Posterior cingulate gyrus (tissue), 11 donors: ENCODE measurements at regions of chr17 and their contacts with region 1.

Region 1: DNA sequence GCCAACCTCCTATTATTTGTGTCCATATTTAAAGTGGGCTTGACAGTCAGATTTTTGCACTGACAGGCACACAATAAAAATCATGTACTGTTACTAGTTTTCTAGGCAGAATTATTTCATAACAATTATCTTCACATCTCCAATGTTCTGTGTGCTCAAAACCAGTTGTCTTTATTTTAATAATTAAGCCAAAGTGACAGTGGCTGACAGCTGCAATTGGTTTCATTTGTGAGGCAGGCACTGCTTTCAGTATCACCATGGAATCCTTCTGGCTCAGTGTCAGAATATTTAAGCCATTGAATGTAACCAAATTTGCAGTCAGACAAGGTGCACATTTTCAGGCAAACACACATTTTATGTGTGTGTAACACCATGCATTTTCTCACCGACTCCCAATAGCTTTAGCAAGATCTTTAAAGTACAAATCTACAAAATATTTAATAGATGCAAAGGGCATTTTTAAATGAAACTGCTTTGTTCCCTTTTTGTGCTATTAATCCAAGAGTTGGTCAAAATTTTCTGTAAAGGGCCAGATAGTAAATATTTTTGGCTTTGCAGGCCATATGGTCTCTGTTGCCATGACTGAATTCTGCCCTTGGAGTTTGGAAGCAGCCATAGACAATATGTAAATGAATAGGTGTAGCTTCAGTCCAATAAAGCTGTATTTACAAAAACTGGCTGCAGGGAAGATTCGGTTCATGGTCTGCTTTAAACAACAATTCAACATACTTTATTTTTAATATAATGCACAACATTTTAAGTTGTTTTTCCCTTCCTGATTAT is 486.0 kb downstream of the KCNJ2 start:
- DNase-seq: no peak

Region 2: DNA sequence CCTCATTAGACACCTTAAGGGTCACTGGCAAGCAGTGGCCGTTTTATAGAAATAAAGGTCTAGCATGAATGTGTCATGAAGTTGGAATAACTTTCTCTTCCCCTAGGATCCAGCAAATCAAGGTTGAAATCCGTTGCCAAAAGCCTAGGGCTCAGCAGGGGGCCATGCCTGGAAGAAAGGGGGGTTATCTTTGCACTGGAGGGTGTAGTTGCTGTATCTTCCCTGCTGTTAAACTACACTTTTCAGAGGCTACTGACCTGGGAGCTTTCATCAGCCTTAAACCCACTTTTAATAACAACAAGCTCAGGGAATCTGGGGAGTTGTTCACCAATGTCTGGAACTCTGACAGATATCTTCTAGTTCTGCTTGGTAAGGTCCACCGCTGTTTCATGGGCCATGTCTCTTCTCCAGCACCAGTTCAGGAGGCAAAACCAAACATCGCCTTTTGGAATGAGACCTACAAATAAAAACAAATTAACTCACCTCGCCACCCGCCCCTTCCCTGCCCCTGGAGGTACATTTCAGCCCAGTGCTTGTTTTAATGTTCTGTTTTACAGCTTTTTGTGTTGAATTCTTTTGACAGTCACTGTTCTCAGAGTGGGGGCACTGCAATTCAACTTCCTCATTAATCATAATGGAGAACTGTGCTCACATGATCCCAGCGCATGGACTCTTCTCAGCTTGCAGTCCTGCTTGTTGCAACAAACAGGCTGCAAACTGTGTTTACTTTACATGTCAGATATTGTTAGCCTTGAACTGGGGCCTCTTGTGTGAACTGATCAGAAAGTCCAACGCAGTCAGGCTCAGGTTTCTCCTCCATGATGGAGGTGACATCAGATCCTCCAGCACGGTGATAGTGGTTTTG is 22.6 kb after region 1 on chr17:
- intact Hi-C with region 1: no loop called
- DNase-seq: no peak

Region 3: DNA sequence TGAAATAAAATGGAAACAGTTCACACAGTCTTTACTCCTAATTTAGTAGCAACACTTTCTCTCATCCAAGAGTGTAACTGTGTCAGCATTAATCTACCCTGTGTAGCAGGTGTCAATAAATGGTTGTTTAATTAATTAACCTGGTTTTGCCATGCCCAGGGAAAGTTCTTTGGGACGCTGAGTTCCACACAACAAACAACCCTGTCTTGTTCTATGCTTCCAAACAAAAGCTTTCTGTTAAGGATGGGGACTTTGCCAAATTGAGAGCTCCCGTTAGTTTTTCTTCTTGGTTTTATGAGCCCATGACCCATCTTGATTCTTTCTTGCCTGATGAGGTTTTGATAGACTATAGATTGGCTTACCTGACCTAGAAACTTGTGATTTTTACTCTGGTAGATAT is 44.0 kb after region 1 on chr17:
- intact Hi-C with region 1: loop called (anchors 5 kb)
- DNase-seq: peak in 1 of 10 donors; percentile 21